ENCODE measurements at regions of chr3 and their contacts with region 1.

Region 1: DNA sequence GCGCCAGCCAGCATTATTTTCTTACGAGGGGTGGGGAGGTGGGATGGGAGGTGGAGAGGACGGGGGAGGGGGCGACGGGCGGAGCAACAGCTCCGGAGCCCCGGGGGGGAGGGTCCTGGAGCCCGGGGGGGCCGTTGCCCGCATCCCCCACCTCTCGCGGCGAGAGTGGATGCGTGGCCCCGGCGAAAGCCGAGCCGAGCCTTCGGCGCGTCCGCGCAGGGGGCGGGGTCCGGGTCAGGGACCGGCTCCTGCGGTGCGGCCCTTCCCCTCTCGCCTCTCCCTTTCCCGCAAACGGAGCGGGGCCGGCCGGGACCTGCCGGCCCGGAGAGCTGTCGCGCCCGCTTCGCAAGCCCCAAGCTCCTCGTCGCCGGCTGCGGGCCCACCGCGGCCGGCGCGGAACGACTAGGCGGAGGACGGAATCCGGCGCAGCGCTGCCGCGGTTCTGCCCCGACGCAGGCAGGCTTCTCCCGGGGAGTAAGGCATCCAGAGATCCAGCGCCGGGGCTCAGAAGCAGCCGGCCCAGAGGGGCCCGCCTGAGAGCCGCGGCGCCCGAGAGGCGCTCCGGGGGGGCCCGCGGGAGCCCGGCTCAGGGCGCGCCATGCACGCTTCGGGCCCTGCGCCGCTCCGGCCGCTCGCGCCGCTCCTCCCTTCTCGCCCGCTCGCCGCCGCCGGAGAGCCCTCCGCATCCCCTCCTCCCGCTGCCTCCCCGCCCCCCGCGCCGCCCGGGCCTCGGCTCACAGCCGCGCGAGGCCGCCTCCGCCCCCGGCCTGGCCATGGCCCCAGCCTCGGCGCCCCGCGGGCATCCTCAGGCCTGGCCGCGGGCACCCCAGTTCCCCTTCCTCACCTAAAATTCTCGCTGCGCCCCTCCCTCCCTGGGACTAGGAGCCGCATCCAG is 459 bp upstream of the ADCY5 start:
- DNase-seq: no peak

Region 2: GRCh38 chr3:123328851-123329635 is 120.3 kb before region 1 on chr3:
- intact Hi-C with region 1: loop called (anchors 2 kb)
- DNase-seq: peak; percentile 90

Region 3: DNA sequence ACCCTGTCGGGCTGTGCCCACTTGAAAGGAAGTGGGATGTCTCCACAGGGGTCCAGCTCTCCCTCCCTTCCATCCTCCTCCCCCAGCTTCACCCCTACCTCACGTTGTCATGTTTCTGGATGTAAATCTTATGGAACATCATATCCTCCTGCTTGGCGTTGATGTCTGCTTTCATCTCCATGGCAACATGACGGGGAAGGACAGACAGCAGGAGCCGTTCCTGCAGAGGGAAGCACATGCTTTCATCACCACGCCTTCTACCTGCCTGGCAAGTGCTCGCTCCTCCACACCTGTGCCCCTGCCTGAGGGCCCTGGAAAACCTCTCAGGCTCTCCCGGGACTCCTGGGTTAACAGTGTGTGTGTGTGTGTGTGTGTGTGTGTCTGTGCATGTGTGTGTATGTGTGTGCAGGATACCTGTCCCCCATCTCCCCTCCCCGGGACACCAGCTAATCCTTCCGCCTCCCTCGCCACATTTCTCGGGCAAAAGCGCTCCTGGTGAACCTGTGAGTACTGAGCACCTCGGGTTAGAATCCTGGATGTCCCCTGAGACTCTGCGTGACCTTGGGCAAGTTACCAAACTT is 101.6 kb before region 1 on chr3:
- intact Hi-C with region 1: loop called (anchors 5 kb)
- DNase-seq: peak; percentile 58

Region 4: DNA sequence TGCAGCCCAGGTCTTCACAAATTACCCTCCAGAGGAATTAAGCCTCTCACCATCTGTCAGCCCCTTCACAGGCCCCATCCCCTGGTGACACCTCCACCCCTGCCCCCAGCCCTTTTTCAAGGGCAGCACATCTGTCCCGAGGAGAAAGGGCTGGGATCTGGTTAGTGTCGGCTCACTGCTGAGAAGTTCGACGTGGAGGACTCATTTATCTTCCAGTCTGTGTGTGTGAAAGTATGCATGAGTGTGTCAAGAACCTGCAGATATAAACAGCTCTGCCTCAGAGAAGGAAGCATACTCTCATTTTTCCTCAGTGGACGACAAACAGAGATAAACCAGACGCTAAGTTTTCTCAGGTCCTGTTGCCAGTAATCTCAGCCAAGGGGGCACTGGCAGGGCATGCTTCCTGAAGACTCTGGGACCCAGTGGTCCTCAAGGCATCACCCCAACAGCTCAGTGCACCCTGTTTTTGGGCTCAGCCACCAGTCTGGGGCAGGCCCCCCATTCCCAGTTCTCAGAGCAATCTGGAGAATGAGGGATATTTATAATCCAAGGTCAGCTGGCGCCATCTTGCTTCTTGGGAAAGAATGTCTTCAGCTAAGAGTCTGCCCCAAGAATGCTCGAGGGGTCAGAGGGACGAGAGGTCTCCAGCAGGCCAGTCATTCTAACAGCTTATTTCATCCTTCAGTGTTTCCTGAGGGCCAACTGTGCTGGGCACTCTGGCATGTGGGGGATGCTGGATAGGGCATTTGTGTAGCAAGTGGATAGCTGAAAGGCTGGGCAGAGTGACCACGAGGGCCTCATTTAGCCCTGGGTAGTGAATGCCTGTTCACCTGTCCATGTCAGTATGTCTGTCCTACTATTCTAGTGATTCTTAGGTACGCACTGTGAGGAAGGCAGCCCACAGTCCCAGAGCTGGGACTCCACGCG is 74.1 kb before region 1 on chr3:
- intact Hi-C with region 1: loop called (anchors 5 kb)
- DNase-seq: peak; percentile 66

Region 5: GRCh38 chr3:123401836-123402530 is 47.4 kb before region 1 on chr3:
- intact Hi-C with region 1: loop called (anchors 2 kb)
- DNase-seq: peak; percentile 87

Region 6: DNA sequence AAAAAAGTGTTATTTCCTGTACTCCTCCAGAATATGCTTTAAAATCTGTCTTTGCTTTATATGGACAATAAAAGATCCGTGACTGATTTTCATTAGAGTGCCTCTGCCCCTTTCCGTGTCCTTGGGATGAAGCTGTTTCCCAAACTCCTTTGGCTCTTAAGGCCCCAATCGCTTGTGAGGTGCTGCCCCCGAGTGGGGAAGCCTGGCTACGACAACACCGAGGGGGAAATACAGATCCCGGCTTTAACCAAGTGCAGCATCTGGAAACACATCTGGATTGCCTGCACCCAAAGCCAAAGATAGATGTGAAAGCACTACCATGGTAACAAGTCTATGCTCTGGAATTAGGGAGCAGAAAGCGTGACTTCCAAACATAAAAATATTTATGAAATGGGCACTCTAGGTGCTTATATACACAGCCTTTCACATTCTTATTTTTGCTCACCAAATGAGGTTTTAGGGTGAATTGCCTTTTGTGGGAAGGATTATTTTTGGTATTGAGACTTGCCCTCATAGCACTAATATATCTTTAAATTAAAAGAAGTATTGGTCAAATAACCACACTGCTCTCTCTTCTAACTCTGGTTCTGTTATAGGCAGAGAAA is 40.2 kb after region 1 on chr3:
- intact Hi-C with region 1: loop called (anchors 2 kb)
- DNase-seq: no peak

Region 7: GRCh38 chr3:123546133-123546755 is 96.9 kb after region 1 on chr3:
- intact Hi-C with region 1: loop called (anchors 10 kb)
- DNase-seq: no peak